Activated CD8-positive, alpha-beta T cell treated with anti-CD3 and anti-CD28 coated beads, Interleukin-2, amount 10 ng/mL, durations not matched to agents 7 days and 5 days (primary cell): ENCODE measurements at regions of chr15 and their contacts with region 1.

Region 1: GRCh38 chr15:33086507-33087121 is 107.9 kb downstream of the FMN1 start:
- DNase-seq: no peak
- ATAC-seq: no peak
- H3K4me3 Mint-ChIP-seq: no peak overlapping the region
- H3K27ac Mint-ChIP-seq: no peak overlapping the region
- H3K4me1 Mint-ChIP-seq: no peaks in the 10 kb centered on the region
- H3K27me3 Mint-ChIP-seq: no peaks in the 10 kb centered on the region

Region 2: DNA sequence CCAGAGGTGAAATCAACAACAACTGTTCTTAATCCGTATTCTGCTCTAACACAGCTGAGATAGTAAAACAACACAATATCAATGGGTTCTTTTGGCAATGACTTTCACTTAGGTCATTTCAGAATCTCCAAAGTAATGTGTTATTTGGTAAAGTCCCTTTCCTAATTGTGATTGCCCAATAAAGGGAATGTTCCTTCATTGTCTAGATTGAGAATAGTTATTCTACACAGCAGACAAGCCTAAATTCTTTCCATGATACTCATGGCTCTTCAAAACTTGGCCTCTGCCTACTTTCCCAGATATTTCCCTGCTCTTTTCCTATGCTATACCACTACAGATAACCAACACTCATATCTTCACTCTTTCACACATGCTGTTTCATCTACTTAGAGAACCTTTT is 111.9 kb before region 1 on chr15:
- CTCF ChIA-PET with region 1: no interaction called
- POLR2A ChIA-PET with region 1: no interaction called
- DNase-seq: no peak
- ATAC-seq: no peak
- H3K4me3 Mint-ChIP-seq: no peak overlapping the region
- H3K27ac Mint-ChIP-seq: no peak overlapping the region
- H3K4me1 Mint-ChIP-seq: no peaks in the 10 kb centered on the region
- H3K27me3 Mint-ChIP-seq: peaks cover 6% of the 10 kb centered on the region

Region 3: DNA sequence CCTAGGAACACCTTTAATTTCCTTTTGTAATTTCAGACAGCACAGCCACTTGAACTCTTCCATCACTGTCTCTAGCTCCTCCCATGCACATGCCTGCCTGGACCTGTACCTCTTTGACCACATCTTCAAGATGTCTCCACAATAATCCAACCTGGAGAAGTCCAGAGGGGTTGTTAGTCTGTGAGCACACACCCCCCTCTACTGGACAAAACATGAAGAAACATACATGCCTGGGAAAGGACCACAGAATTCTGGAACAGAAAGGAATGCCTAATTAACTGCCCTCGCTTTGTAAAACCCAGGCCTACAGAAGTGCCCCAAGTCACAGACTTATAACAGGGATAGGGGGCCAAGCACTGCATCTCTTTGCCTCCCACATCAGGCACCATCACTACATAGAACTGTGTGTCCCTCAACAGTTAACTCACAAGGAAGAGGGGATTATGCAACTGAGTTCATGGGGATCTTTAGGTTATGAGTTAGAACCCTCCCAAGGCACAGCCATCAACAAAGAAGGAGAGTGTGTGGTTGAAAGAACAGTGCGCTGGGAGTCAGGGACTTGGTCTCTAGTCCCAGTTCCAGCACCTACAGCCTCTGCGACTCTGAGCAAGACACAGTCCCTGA is 46.2 kb after region 1 on chr15:
- CTCF ChIA-PET with region 1: interaction called, 16 read pairs
- POLR2A ChIA-PET with region 1: no interaction called
- DNase-seq: no peak
- ATAC-seq: no peak
- H3K4me3 Mint-ChIP-seq: no peak overlapping the region
- H3K27ac Mint-ChIP-seq: no peak overlapping the region
- H3K4me1 Mint-ChIP-seq: no peaks in the 10 kb centered on the region
- H3K27me3 Mint-ChIP-seq: no peaks in the 10 kb centered on the region